Caco-2 (cell line): ENCODE measurements at regions of chr5 and their contacts with region 1.

Region 1: GRCh38 chr5:32613050-32613672 is 27.8 kb downstream of the SUB1 start:
- DNase-seq: peak; percentile 76 to 85
- H3K4me3 ChIP-seq: no peak overlapping the region
- H3K4me3 Mint-ChIP-seq: no peak overlapping the region
- H3K27ac Mint-ChIP-seq: no peak overlapping the region
- H3K4me1 ChIP-seq: no peaks in the 10 kb centered on the region
- H3K4me1 Mint-ChIP-seq: no peaks in the 10 kb centered on the region
- H3K27me3 ChIP-seq: no peaks in the 10 kb centered on the region
- H3K27me3 Mint-ChIP-seq: no peaks in the 10 kb centered on the region
- CTCF ChIP-seq: peak; percentile 86 to 93

Region 2: GRCh38 chr5:31825518-31826068 is 787.6 kb before region 1 on chr5:
- CTCF ChIA-PET with region 1: no interaction called
- POLR2A ChIA-PET with region 1: no interaction called
- intact Hi-C with region 1: loop called (anchors 1 kb)
- DNase-seq: peak; percentile 43 to 55
- H3K4me3 ChIP-seq: no peak overlapping the region
- H3K4me3 Mint-ChIP-seq: no peak overlapping the region
- H3K27ac Mint-ChIP-seq: no peak overlapping the region
- H3K4me1 ChIP-seq: no peaks in the 10 kb centered on the region
- H3K4me1 Mint-ChIP-seq: no peaks in the 10 kb centered on the region
- H3K27me3 ChIP-seq: no peaks in the 10 kb centered on the region
- H3K27me3 Mint-ChIP-seq: no peaks in the 10 kb centered on the region
- CTCF ChIP-seq: peak; percentile 55 to 66

Region 3: GRCh38 chr5:32232441-32233219 is 380.5 kb before region 1 on chr5:
- CTCF ChIA-PET with region 1: no interaction called
- POLR2A ChIA-PET with region 1: no interaction called
- intact Hi-C with region 1: loop called (anchors 2 kb)
- DNase-seq: peak; percentile 67 to 80
- H3K4me3 ChIP-seq: no peak overlapping the region
- H3K4me3 Mint-ChIP-seq: no peak overlapping the region
- H3K27ac Mint-ChIP-seq: peak overlapping the region; percentile 64
- H3K4me1 ChIP-seq: peaks cover 40% of the 10 kb centered on the region
- H3K4me1 Mint-ChIP-seq: peaks cover 44% of the 10 kb centered on the region
- H3K27me3 ChIP-seq: no peaks in the 10 kb centered on the region
- H3K27me3 Mint-ChIP-seq: no peaks in the 10 kb centered on the region
- CTCF ChIP-seq: peak; percentile 73 to 81

Region 4: DNA sequence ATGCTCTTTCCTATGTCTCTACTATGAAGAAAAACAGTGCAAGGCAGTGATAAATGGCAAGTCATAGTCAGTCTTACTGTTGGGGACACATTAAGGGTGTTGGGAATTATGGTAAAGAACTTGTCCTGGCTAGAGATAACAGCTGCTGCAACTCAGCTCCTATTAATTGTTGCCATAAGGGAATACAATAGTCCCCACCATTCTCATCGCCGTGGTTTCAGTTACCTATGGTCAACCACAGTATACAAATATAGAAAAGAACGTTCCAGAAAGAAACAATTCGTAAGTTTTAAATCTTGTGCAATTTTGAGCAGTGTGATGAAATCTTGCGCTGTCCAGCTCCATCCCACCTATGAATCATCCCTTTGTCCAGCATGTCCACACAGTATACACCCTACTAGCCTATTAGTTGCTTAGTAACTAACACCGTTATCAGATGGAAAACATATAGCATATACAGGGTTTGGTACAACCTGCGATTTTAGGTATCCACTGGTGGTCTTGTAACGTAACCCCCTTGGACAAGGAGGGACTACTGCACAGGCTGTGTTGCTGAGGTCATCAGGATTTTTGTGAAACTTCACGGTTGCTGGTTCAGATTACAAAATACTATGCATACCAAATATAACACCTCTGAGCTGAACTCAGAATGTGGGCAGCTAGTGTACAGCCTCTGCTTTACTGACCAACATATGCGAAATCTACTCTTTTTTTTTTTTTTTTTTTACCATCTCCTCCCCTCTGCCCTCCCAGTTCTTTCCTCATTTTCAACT is 222.2 kb before region 1 on chr5:
- CTCF ChIA-PET with region 1: no interaction called
- POLR2A ChIA-PET with region 1: no interaction called
- intact Hi-C with region 1: loop called (anchors 5 kb)
- DNase-seq: peak in 1 of 2 experiments; percentile 34
- H3K4me3 ChIP-seq: no peak overlapping the region
- H3K4me3 Mint-ChIP-seq: no peak overlapping the region
- H3K27ac Mint-ChIP-seq: peak overlapping the region; percentile 79
- H3K4me1 ChIP-seq: no peaks in the 10 kb centered on the region
- H3K4me1 Mint-ChIP-seq: no peaks in the 10 kb centered on the region
- H3K27me3 ChIP-seq: no peaks in the 10 kb centered on the region
- H3K27me3 Mint-ChIP-seq: no peaks in the 10 kb centered on the region
- CTCF ChIP-seq: no peak

Region 5: DNA sequence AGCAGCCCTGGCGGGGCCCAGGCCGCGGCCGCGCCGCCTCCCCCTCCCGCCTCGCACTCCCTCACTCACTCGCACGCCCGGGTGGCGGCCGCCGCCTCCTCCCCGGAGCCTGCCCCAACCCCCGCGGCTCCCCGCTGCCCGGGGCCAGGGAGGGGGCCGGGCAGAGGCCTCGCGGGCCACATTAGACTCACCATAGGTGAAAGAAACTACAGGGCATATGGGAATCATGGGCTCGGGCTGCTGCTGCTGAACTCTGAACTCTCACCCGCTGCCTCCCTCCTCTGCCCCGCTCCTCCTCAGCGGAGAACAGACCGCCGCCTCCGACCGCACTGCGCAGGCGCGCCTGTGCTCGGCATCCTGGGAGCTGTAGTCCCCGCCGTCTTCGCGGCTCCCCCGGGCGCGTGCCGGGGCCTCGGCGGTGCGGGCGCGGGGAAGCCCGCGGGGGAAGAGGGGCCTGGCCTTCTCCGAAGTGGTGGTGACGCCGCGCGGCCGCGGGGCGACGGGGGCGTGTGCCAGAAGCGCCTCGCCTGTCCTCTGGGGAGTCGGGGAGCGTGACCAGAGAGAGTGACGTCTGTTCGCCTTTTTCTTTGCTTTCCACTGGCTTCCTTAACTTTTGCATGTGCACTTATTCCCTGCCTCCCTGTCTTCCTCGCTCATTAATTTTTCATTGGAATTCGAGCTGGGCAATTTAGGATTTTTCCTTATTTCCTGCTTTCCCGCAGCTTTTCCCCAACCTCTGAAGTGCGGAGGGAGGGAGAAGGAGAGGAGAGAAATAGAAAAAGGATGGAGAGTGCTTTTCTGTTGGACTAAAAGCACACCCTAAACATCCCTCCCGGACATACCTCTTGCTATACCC is 168.5 kb before region 1 on chr5 and contains the start of gene ZFR:
- CTCF ChIA-PET with region 1: no interaction called
- POLR2A ChIA-PET with region 1: no interaction called
- intact Hi-C with region 1: loop called (anchors 1 kb)
- DNase-seq: peak; percentile 95
- H3K4me3 ChIP-seq: peak within 1 kb of the TSS; percentile 98
- H3K4me3 Mint-ChIP-seq: peak within 1 kb of the TSS; percentile 82
- H3K27ac Mint-ChIP-seq: peak within 1 kb of the TSS; percentile 39
- H3K4me1 ChIP-seq: peaks cover 12% of the 10 kb centered on the region
- H3K4me1 Mint-ChIP-seq: peaks cover 18% of the 10 kb centered on the region
- H3K27me3 ChIP-seq: no peaks in the 10 kb centered on the region
- H3K27me3 Mint-ChIP-seq: no peaks in the 10 kb centered on the region
- CTCF ChIP-seq: no peak
- total RNA-seq, gene ZFR: 75.1 and 78.3 TPM in 2 replicates

Region 6: GRCh38 chr5:32630867-32631491 is 17.8 kb after region 1 on chr5:
- CTCF ChIA-PET with region 1: no interaction called
- POLR2A ChIA-PET with region 1: no interaction called
- intact Hi-C with region 1: no loop called
- DNase-seq: no peak
- H3K4me3 ChIP-seq: no peak overlapping the region
- H3K4me3 Mint-ChIP-seq: no peak overlapping the region
- H3K27ac Mint-ChIP-seq: no peak overlapping the region
- H3K4me1 ChIP-seq: no peaks in the 10 kb centered on the region
- H3K4me1 Mint-ChIP-seq: no peaks in the 10 kb centered on the region
- H3K27me3 ChIP-seq: no peaks in the 10 kb centered on the region
- H3K27me3 Mint-ChIP-seq: no peaks in the 10 kb centered on the region
- CTCF ChIP-seq: no peak

Region 7: DNA sequence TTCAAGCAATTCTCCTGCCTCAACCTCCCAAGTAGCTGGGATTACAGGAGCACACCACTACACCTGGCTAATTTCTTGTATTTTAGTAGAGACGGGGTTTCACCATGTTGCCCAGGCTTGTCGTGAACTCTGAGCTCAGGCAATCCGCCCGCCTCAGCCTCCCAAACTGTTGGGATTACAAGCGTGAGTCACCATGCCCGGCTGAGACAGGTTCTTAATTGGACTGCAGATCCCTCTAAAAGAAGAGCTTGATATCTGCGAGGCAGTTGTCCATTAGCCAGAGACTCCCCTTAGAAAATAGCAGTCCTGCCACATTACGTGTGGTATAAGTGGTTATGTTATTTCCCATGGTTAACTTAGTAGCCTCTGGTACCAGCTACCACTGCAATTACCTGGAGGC is 51.4 kb after region 1 on chr5:
- CTCF ChIA-PET with region 1: no interaction called
- POLR2A ChIA-PET with region 1: no interaction called
- intact Hi-C with region 1: no loop called
- DNase-seq: no peak
- H3K4me3 ChIP-seq: no peak overlapping the region
- H3K4me3 Mint-ChIP-seq: no peak overlapping the region
- H3K27ac Mint-ChIP-seq: no peak overlapping the region
- H3K4me1 ChIP-seq: no peaks in the 10 kb centered on the region
- H3K4me1 Mint-ChIP-seq: no peaks in the 10 kb centered on the region
- H3K27me3 ChIP-seq: no peaks in the 10 kb centered on the region
- H3K27me3 Mint-ChIP-seq: no peaks in the 10 kb centered on the region
- CTCF ChIP-seq: no peak

Region 8: DNA sequence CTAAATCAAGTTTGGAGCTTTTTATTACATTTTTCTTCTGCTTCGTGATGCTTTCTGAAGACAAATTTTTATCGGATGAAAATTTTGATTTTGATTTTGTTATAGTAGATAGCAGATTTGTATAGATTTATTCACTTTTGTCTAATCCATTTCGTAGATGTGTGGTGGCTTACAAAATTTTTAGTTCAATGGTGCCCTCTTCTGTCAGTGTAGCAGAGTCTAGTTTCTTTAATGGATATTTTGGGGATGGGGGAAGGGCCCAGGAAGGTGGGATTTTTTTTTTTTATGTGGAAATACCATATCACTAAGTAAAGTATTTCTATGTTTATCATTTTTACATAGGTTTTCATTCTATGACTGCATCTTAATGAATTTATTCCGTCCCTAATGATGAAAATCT is 567.7 kb after region 1 on chr5:
- CTCF ChIA-PET with region 1: no interaction called
- POLR2A ChIA-PET with region 1: no interaction called
- intact Hi-C with region 1: no loop called
- DNase-seq: peak in 1 of 2 experiments; percentile 14
- H3K4me3 ChIP-seq: no peak overlapping the region
- H3K4me3 Mint-ChIP-seq: no peak overlapping the region
- H3K27ac Mint-ChIP-seq: no peak overlapping the region
- H3K4me1 ChIP-seq: no peaks in the 10 kb centered on the region
- H3K4me1 Mint-ChIP-seq: peaks cover 7% of the 10 kb centered on the region
- H3K27me3 ChIP-seq: no peaks in the 10 kb centered on the region
- H3K27me3 Mint-ChIP-seq: peaks cover 7% of the 10 kb centered on the region
- CTCF ChIP-seq: peak; percentile 10 to 27

Region 9: GRCh38 chr5:33423018-33423630 is 810.0 kb after region 1 on chr5:
- CTCF ChIA-PET with region 1: no interaction called
- POLR2A ChIA-PET with region 1: no interaction called
- intact Hi-C with region 1: loop called (anchors 5 kb)
- DNase-seq: peak in 1 of 2 experiments; percentile 11
- H3K4me3 ChIP-seq: no peak overlapping the region
- H3K4me3 Mint-ChIP-seq: no peak overlapping the region
- H3K27ac Mint-ChIP-seq: no peak overlapping the region
- H3K4me1 ChIP-seq: no peaks in the 10 kb centered on the region
- H3K4me1 Mint-ChIP-seq: no peaks in the 10 kb centered on the region
- H3K27me3 ChIP-seq: no peaks in the 10 kb centered on the region
- H3K27me3 Mint-ChIP-seq: peaks cover 20% of the 10 kb centered on the region
- CTCF ChIP-seq: peak; percentile 37 to 40